Activated CD8-positive, alpha-beta memory T cell treated with anti-CD3 and anti-CD28 coated beads, Interleukin-2, amount 10 ng/mL, durations not matched to agents 7 days and 5 days (primary cell): ENCODE measurements at regions of chr11 and their contacts with region 1.

Region 1: DNA sequence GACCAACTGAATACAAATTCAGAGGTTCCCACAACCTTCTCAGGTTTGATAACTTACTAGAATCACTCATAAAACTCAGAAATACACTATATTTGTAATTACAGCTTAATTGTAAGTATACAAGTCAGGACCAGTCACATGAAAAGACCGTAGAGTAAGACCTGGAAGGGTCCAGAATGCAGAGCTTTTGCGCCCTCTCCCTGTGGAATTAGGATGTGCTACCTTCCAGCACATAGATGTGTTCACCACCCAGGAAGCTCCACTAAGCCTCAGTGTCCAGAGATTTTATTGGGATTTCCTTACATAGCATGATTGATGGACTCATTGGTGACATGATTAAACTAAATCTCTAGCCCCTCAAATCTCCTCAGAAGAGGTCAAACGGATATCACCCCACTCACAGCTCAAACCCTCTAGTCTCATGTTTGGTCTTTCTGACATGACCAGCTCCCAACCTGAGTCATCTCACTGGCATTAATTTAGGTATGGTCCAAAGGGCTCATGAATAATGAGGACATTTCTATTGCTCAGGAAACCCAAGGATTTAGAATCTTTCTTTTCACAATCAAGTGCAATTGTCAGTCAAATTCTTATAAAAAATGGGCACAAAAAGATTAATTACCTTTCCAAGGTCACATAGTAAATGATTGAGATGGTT is 77.2 kb upstream of the UBASH3B start:
- DNase-seq: no peak
- ATAC-seq: no peak
- H3K4me3 Mint-ChIP-seq: no peak overlapping the region
- H3K27ac Mint-ChIP-seq: no peak overlapping the region
- H3K4me1 Mint-ChIP-seq: peaks cover 11% of the 10 kb centered on the region
- H3K27me3 Mint-ChIP-seq: peaks cover 7% of the 10 kb centered on the region

Region 2: DNA sequence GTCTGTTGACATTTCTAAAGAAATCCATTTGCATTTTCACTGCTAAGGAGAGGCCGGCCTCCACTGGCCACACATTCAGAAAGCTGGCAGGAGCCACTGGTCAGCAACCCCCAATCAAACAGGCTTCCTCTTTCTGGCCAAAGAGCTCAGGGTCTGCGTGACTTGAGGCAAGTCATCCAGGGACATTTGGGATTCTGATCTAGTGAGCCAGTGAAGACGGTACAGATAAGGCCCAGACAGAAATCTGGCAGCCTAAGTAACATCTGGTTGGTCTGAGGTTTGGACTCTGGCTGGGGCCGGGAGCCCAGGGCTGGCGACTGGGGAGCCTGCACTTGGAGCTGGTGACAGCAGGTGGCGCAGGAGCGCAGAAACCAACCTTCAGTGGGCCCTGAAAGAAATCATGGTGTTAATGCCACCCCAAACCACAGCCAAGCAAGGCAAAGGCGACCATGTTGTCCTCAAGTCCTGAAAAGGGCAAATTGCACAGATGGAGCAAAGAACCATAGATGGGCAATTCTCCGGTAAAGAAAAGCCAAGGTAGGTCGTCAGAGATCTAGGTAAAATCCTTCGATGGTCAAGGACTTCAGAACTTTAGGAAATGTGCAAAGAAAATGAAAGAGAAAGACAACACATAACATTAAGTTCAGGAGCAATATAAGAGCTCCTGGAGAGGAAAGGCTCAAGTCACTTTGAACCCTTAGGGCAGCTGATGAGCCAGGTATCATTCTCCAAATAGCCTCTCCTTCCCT is 362.9 kb before region 1 on chr11:
- CTCF ChIA-PET with region 1: no interaction called
- DNase-seq: peak; percentile 42
- ATAC-seq: peak; percentile 57
- H3K4me3 Mint-ChIP-seq: no peak overlapping the region
- H3K27ac Mint-ChIP-seq: no peak overlapping the region
- H3K4me1 Mint-ChIP-seq: no peaks in the 10 kb centered on the region
- H3K27me3 Mint-ChIP-seq: no peaks in the 10 kb centered on the region

Region 3: DNA sequence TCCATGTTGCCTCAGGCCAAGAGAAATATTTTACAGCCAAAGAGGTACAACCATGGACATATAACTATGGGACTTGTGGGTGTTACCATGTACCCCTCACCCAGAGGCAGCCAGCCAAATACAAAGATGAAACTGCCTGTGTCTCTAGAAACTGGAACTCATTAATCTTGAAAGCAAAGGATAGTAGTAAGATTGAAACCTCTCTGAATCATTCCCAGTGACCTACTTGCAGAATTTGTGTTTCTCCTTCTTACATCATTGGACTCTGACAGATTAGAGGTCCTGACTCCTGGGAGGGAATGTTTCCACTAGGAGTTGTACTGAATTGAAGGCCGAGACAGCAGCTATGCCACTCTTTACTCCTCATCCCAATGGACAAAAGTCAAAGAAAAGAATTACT is 180.1 kb before region 1 on chr11:
- CTCF ChIA-PET with region 1: no interaction called
- DNase-seq: no peak
- ATAC-seq: no peak
- H3K4me3 Mint-ChIP-seq: no peak overlapping the region
- H3K27ac Mint-ChIP-seq: no peak overlapping the region
- H3K4me1 Mint-ChIP-seq: peaks cover 16% of the 10 kb centered on the region
- H3K27me3 Mint-ChIP-seq: no peaks in the 10 kb centered on the region

Region 4: DNA sequence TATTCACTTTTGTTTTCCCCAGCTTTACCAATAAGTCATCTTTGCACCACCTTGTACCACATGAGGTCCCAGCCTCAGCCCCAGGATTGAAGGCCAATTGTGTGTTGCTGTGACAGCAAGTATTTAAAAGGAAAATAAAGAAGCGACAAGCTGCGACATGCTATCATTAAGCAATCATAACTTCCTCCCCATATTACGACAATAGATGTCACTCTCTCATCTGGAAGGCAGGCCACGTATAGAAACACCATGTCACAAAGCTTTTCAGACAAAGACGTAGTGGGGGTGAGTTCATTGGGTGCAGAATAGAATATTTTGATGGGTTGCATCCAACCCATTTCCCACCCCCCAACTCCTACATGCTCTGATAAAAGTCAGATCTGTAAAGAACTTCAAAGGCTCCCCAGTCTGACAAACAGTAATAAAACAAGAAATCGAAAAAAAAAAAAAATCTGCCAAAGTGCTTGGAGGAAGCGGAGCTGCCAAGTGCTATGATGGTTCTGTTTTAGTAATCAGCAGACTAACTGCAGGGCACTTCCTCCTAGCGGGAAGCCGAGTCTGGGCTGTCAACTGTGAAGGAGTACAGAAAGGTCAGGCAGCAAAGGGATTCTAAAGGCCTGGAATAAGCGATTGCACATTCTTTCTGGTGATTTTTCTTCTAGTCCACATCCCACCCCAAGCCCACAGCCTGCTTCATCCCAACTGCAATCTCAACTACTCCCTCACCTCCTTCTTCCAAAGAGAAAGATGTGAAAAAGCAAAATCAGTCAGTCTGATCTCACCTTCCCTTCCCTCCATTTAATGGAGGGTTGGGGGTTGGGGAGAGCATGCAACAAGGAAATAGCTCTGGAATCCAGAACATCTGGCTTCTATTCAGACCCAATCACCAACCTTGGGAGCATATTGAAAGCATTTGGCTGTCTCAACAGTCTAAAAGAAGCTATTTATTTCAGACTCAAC is 54.2 kb before region 1 on chr11:
- CTCF ChIA-PET with region 1: no interaction called
- DNase-seq: no peak
- ATAC-seq: no peak
- H3K4me3 Mint-ChIP-seq: no peak overlapping the region
- H3K27ac Mint-ChIP-seq: no peak overlapping the region
- H3K4me1 Mint-ChIP-seq: no peaks in the 10 kb centered on the region
- H3K27me3 Mint-ChIP-seq: peaks cover 30% of the 10 kb centered on the region

Region 5: DNA sequence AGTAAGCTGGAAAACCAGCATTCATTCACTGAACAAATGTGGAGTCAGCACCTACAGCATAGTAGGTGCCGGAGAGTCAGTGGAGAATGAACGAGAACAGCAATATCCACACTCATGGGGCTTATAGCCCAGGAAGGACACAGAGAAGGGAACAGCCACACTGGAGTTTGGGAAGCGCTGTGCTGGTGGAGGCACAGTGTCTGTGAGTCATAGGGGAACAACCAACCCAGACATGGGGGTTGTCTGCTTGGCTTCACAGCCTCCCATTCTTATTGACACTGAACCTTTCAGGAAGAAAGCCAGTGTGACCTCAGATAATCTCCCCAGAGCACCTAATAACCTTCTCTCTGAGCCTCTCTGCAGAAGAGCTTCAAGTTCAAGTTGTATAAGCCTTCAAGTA is 20.7 kb after region 1 on chr11:
- CTCF ChIA-PET with region 1: interaction called, 19 read pairs
- DNase-seq: no peak
- ATAC-seq: no peak
- H3K4me3 Mint-ChIP-seq: no peak overlapping the region
- H3K27ac Mint-ChIP-seq: no peak overlapping the region
- H3K4me1 Mint-ChIP-seq: peaks cover 4% of the 10 kb centered on the region
- H3K27me3 Mint-ChIP-seq: peaks cover 20% of the 10 kb centered on the region

Region 6: GRCh38 chr11:122628810-122629555 is 50.7 kb after region 1 on chr11:
- CTCF ChIA-PET with region 1: interaction called, 29 read pairs
- DNase-seq: peak; percentile 81
- ATAC-seq: peak; percentile 88
- H3K4me3 Mint-ChIP-seq: no peak overlapping the region
- H3K27ac Mint-ChIP-seq: no peak overlapping the region
- H3K4me1 Mint-ChIP-seq: peaks cover 15% of the 10 kb centered on the region
- H3K27me3 Mint-ChIP-seq: peaks cover 7% of the 10 kb centered on the region

Region 7: DNA sequence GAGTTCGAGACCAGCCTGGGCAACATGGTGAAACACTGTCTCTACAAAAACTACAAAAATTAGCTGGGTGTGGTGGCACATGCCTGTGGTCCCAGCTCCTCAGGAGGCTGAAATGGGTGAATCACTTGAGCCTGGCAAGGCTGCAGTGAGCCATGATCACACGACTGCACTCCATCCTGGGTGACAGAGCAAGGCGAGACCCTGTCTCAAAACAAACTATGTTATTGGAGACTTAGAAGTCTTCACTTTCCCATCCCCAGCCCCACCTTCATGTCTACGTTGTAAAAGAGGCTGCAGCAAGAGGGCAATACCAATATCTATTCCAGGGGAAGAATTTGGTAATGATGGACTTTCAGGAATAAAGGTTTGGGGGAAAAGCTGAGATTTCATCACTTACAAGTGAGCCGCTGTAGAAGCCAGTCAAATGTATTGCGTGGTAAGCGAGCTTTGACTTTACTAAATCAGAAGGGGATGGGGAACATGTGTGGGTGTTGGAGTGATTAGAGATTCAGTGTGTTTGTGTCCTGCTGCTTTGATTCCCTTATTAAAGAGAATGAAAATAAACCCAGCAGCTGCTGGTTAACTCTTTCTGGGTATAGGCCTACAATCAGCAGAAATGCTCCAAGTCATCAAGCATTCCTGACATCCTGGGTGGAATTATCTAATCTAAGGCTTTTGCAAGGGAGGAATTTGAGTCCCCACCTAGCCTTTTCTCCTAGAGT is 130.9 kb after region 1 on chr11:
- CTCF ChIA-PET with region 1: no interaction called
- DNase-seq: no peak
- ATAC-seq: no peak
- H3K4me3 Mint-ChIP-seq: no peak overlapping the region
- H3K27ac Mint-ChIP-seq: no peak overlapping the region
- H3K4me1 Mint-ChIP-seq: peaks cover 31% of the 10 kb centered on the region
- H3K27me3 Mint-ChIP-seq: no peaks in the 10 kb centered on the region

Region 8: DNA sequence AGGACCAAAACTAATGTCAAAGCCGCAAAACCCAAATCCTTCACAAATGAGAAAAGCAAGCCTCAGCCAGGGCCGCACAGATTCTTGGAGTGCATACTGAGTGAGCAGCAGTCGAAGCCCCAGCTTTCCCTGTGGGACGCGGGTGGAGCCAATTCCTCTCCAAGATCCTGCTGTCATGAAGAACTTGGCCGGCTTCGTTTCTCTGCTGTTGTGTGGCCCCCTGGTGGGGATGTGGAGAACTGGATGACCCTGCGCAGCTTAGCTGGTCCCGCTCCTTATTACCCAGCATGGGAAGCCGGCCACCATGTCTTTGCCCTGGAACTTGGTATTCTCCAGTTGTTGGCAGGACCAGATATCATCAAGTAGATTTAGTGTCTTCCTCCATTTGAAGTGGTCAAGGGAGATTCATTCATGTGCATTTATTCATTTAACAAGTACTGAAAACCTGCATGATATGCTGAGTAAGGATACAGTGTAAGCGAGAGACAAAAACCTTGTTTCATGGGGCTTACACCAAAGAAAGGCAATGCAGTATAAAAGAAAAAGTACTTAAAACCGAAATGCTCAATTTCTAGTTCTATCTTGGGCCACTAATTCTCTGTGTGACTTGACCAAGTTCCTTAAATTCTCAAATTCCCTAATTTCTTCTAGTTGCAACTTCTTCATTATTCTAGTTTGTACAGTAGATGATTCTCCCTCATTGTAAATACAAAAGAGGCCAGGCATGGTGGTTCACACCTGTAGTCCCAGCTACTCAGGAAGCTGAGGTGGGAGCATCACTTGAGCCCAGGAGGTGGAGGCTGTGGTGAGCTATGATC is 203.3 kb after region 1 on chr11:
- CTCF ChIA-PET with region 1: interaction called, 26 read pairs
- DNase-seq: peak; percentile 82
- ATAC-seq: peak; percentile 87
- H3K4me3 Mint-ChIP-seq: no peak overlapping the region
- H3K27ac Mint-ChIP-seq: no peak overlapping the region
- H3K4me1 Mint-ChIP-seq: peaks cover 20% of the 10 kb centered on the region
- H3K27me3 Mint-ChIP-seq: no peaks in the 10 kb centered on the region